Ascending aorta (tissue), 2 donors: ENCODE measurements at regions of chr13 and their contacts with region 1.

Region 1: GRCh38 chr13:85236431-85236830 is 562.8 kb downstream of the SLITRK6 start:
- DNase-seq: no peak
- H3K4me3 ChIP-seq: no peak overlapping the region
- H3K27ac ChIP-seq: no peak overlapping the region
- H3K4me1 ChIP-seq: no peaks in the 10 kb centered on the region
- H3K27me3 ChIP-seq: no peaks in the 10 kb centered on the region
- CTCF ChIP-seq: no peak

Region 2: DNA sequence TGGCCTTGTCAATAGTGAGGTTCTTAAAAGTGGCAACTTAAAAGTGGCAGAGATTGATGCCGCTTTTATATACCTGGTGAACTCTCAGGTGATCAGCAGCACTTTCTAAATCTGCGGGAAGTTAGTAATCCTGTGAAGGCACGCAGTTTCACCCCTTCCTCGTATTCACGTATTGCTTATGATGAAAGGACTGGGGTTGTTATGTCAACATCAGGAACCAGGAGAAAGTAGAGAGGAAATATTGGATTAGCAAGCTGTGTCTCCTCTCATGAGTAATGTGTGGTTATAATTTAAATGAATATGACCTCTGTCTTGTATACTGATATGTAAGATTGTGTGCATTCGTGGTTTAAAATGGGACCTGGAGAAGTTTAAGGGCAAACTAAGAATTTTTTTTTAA is 18.2 kb after region 1 on chr13:
- intact Hi-C with region 1: loop called (anchors 1 kb)
- DNase-seq: no peak
- H3K4me3 ChIP-seq: no peak overlapping the region
- H3K27ac ChIP-seq: no peak overlapping the region
- H3K4me1 ChIP-seq: no peaks in the 10 kb centered on the region
- H3K27me3 ChIP-seq: no peaks in the 10 kb centered on the region
- CTCF ChIP-seq: no peak

Region 3: GRCh38 chr13:87003265-87003664 is 1766.8 kb after region 1 on chr13:
- intact Hi-C with region 1: no loop called
- DNase-seq: no peak
- H3K4me3 ChIP-seq: no peak overlapping the region
- H3K27ac ChIP-seq: no peak overlapping the region
- H3K4me1 ChIP-seq: no peaks in the 10 kb centered on the region
- H3K27me3 ChIP-seq: no peaks in the 10 kb centered on the region
- CTCF ChIP-seq: no peak